Activated CD8-positive, alpha-beta T cell treated with anti-CD3 and anti-CD28 coated beads for 36 hours (primary cell): ENCODE measurements at regions of chr3 and their contacts with region 1.

Region 1: DNA sequence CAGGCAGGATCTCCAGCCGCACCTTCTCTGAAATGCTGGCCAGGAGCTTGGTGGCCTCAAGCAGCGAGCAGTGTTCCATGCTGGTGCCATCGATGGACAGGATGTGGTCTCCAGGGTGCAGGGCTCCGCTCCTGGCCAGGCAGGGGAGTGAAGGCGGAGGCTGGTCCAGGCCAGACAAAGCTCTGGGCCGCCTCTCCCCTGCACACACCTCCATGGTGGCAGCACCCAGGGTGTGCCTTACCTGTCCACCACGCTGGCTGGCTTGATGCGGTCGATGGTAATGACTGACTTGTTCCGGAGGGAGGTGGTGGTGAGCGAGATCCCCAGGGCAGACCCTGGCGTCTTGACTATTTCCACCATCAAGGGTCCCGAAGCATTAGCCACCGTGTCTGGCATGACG is 20.0 kb downstream of the GRIP2 start:
- DNase-seq: no peak
- ATAC-seq: no peak
- H3K4me3 Mint-ChIP-seq: no peak overlapping the region
- H3K27ac Mint-ChIP-seq: no peak overlapping the region
- H3K4me1 Mint-ChIP-seq: no peaks in the 10 kb centered on the region
- H3K27me3 Mint-ChIP-seq: peaks cover 2% of the 10 kb centered on the region
- CTCF ChIP-seq: no peak

Region 2: GRCh38 chr3:14452679-14453367 is 67.3 kb before region 1 on chr3:
- CTCF ChIA-PET with region 1: no interaction called
- POLR2A ChIA-PET with region 1: no interaction called
- intact Hi-C with region 1: no loop called
- DNase-seq: no peak
- ATAC-seq: no peak
- H3K4me3 Mint-ChIP-seq: no peak overlapping the region
- H3K27ac Mint-ChIP-seq: no peak overlapping the region
- H3K4me1 Mint-ChIP-seq: no peaks in the 10 kb centered on the region
- H3K27me3 Mint-ChIP-seq: no peaks in the 10 kb centered on the region
- CTCF ChIP-seq: no peak

Region 3: DNA sequence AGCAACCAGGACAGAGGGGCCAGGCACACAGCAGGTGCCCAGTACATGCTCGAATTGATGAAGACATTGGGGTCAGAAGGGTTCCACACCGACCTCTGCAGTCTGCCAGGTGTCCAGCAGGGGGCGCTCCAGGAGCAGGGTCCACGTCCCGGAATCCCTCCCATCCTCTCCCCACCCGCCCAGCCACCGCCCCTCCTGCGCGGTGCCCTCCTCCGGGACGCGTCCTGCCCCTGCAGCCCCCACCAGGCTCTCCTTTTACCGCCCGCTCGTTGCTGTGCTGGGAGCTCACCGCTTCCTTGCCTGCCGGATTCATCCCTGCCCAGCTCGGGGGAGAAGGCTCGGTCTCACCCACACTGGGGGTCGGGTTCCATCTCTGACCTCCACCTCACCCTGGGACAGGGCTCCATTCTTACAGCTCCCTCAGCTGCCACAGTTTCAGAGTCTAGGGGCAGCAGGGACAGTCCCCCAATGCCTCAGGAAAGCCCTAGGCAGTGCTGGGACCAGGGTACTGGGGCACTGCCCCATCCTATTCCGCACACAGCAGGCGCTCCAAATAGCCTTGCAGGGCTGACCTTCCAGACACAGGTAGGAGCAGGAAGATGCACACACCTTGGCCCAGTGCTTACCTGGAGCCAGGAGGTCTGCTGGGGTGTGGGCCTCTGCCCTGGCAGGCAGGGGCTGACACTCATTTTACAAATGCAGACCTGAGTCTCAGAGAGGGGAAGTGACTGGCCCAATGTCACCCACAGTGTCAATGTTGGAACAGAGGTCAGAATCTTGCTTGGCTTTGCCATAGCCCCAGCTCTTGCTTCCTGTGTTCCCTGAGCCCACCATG is 11.0 kb before region 1 on chr3:
- CTCF ChIA-PET with region 1: interaction called, 13 read pairs
- POLR2A ChIA-PET with region 1: interaction called, 3 read pairs
- intact Hi-C with region 1: no loop called
- DNase-seq: peak; percentile 85
- ATAC-seq: peak; percentile 94
- H3K4me3 Mint-ChIP-seq: no peak overlapping the region
- H3K27ac Mint-ChIP-seq: no peak overlapping the region
- H3K4me1 Mint-ChIP-seq: no peaks in the 10 kb centered on the region
- H3K27me3 Mint-ChIP-seq: no peaks in the 10 kb centered on the region
- CTCF ChIP-seq: peak; percentile 99